ENCODE measurements at regions of chr3 and their contacts with region 1.

Region 1: DNA sequence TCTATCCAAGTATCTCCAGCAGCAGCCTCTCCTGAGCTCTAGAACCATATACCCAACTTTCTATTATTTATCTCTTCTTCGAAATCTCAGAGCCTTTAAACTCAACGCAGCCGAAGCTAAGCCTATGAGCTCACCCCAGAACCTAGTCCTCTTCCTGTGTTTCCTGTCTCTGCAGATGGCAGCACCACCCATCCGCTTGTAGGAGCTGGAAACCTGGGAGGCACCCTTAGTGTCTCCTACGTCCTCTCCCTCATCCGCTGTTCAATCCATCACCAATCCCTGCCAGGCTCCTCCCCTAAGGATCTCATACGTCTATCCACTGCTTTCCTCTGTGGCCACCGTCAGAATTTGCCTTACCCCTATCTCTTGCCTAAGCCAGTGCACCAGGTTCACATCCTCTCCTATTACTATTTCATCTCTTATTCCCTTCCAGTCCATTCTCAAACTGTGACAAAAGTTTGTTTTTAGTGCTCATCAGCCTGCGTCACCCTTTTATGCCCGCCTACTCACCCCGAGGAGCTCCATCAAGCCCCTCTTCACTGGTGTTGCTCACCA is 9.6 kb downstream of the VGLL4 start:
- DNase-seq: peak; percentile 53
- H3K4me3 ChIP-seq: no peak overlapping the region
- H3K27ac ChIP-seq: peak overlapping the region; percentile 60
- H3K4me1 ChIP-seq: peaks cover 62% of the 10 kb centered on the region
- H3K27me3 ChIP-seq: no peaks in the 10 kb centered on the region
- CTCF ChIP-seq: no peak
- POLR2A ChIP-seq: no peak

Region 2: DNA sequence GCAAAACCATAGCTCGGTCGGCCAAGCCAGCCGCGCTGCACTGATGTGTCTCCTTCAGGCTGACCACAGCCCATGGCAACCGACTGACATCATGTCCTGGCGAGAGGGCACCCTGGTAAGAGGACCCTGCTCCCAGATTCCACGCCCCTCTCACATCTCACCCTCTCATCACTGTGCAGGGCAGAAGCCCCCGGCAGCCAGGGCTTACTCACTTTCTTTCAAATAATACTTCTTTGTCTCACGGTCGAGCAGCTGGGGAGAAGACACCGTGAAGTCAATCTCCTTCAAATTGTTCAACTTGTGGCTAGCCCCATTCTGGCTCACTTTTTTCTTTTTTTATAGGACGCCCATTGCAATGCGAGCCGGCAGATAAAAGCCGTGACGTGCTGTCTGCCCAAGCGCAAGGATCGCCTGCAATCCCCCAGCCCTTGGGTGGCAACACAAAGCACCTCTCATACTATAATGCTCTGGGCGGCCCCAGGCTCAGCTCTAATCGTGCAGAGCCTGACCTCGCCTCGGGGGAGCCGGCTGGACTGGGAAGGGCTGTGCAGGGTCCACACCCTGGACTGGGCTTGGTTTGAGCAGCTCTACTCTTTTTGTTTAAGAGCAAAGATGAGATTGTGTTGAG is 24.0 kb before region 1 on chr3:
- CTCF ChIA-PET with region 1: interaction called, 5 read pairs
- POLR2A ChIA-PET with region 1: interaction called, 3 read pairs
- dilution Hi-C with region 1: no loop called
- intact Hi-C with region 1: loop called (anchors 1 kb)
- DNase-seq: no peak
- H3K4me3 ChIP-seq: no peak overlapping the region
- H3K27ac ChIP-seq: no peak overlapping the region
- H3K4me1 ChIP-seq: no peaks in the 10 kb centered on the region
- H3K27me3 ChIP-seq: no peaks in the 10 kb centered on the region
- CTCF ChIP-seq: no peak
- POLR2A ChIP-seq: no peak

Measured in endothelial cell of umbilical vein (primary cell).